ENCODE measurements at regions of chr5 and their contacts with region 1.

Region 1: GRCh38 chr5:87780831-87781760 is 368.4 kb upstream of the CCNH start:
- DNase-seq: peak; percentile 38 to 60 (median 59)
- H3K4me3 ChIP-seq: no peak overlapping the region
- H3K4me3 Mint-ChIP-seq: peak overlapping the region in 1 of 2 donors; percentile 2
- H3K27ac ChIP-seq: no peak overlapping the region
- H3K27ac Mint-ChIP-seq: no peak overlapping the region
- H3K4me1 ChIP-seq: no peaks in the 10 kb centered on the region
- H3K4me1 Mint-ChIP-seq: peaks cover 3% of the 10 kb centered on the region
- H3K27me3 ChIP-seq: peaks cover 12 to 27% of the 10 kb centered on the region in 2 donors
- H3K27me3 Mint-ChIP-seq: peaks cover 9 to 25% (median 17%) of the 10 kb centered on the region in 3 donors
- CTCF ChIP-seq: peak; percentile 79

Region 2: GRCh38 chr5:88680253-88681132 is 899.4 kb after region 1 on chr5:
- intact Hi-C with region 1: loop called in 1 of 2 experiments (anchors 5 kb)
- DNase-seq: peak; percentile 53 to 69 (median 58)
- H3K4me3 ChIP-seq: peak overlapping the region; percentile 21 to 77 (median 27)
- H3K4me3 Mint-ChIP-seq: peak overlapping the region; percentile 71 to 87
- H3K27ac ChIP-seq: no peak overlapping the region
- H3K27ac Mint-ChIP-seq: no peak overlapping the region
- H3K4me1 ChIP-seq: peaks cover 12 to 20% of the 10 kb centered on the region in 2 donors
- H3K4me1 Mint-ChIP-seq: peaks cover 32% of the 10 kb centered on the region
- H3K27me3 ChIP-seq: peaks cover 92 to 99% of the 10 kb centered on the region in 2 donors
- H3K27me3 Mint-ChIP-seq: peaks cover 94 to 99% (median 95%) of the 10 kb centered on the region in 3 donors
- CTCF ChIP-seq: peak; percentile 99

Region 3: GRCh38 chr5:88690409-88691229 is 909.5 kb after region 1 on chr5:
- intact Hi-C with region 1: loop called in 1 of 2 experiments (anchors 5 kb)
- DNase-seq: peak; percentile 58 to 70 (median 69)
- H3K4me3 ChIP-seq: peak overlapping the region in 1 of 3 experiments; percentile 63
- H3K4me3 Mint-ChIP-seq: peak overlapping the region; percentile 66 to 97
- H3K27ac ChIP-seq: no peak overlapping the region
- H3K27ac Mint-ChIP-seq: no peak overlapping the region
- H3K4me1 ChIP-seq: peaks cover 21 to 22% of the 10 kb centered on the region in 2 donors
- H3K4me1 Mint-ChIP-seq: peaks cover 37% of the 10 kb centered on the region
- H3K27me3 ChIP-seq: peaks cover 98 to 100% of the 10 kb centered on the region in 2 donors
- H3K27me3 Mint-ChIP-seq: peaks cover 100% of the 10 kb centered on the region in 3 donors
- CTCF ChIP-seq: peak; percentile 96

Measured in CD14-positive monocyte (primary cell).